WTC11 (cell line): ENCODE measurements at regions of chr6 and their contacts with region 1.

Region 1: DNA sequence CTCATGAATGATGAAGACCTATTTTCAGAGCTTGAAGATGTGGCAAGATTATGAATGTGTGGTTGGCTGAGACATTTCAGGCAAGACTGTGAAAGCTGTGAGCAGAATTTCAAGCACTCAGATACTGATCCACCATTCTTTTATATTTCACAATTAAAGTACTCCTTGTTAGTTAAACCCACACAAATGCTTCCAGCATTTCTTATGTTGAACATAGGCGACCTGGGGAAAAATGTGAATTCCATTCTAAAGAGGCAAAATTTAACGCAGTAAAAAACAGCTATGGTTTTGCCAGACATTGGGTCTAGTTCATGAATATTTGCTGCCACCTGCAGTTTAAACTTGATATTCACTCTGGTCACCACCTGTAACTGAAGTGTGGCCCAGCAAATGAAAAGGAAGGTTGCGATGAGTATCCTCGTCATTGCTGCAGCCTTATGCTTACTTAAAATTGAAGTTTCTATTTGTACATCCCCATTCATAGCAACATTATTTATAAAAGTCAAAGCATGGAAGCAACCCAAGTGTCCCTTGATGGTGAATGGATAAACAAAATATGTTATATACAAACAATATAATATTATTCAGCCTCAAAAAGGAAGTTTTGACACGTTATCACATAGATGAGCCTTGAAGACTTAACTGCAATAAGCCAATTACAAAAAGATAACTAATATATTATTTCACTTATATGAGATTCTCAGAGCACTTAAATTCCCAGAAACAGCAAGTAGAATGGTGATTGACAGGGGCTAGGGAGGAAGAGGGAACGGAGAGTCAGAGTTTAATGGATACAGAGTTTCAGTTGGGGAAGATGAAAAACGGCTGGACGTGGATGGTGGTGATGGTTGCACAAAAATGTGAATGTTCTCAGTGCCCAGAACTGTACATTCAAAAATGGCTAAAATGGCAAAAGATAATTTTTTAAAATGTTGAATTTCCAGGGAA is 32.4 kb upstream of the FAM184A start:
- DNase-seq: peak; percentile 17
- ATAC-seq: peak; percentile 78
- H3K4me3 Mint-ChIP-seq: no peak overlapping the region
- H3K27ac Mint-ChIP-seq: no peak overlapping the region
- H3K4me1 Mint-ChIP-seq: peaks cover 22% of the 10 kb centered on the region
- H3K27me3 Mint-ChIP-seq: no peaks in the 10 kb centered on the region
- CTCF ChIP-seq: no peak

Region 2: DNA sequence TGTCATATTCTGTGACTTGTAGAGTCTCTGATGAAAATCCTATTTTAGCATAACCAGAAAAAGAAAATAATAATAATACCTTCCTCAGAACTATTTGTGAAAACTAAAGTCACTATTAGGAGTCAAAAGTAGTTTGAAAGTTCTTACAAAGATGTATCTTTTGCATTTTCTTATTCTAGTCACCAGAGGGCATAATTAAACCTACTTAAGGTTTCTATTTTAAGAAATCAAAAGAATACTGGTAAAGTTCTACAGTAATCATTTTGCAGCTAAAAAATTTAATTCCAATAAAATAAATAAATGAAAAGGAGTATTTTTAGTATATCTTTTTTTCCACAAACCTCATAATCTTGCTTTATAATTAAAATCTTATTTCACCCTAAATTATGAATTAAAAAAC is 147.9 kb before region 1 on chr6:
- CTCF ChIA-PET with region 1: interaction called, 67 read pairs
- POLR2A ChIA-PET with region 1: no interaction called
- DNase-seq: no peak
- ATAC-seq: no peak
- H3K4me3 Mint-ChIP-seq: no peak overlapping the region
- H3K27ac Mint-ChIP-seq: no peak overlapping the region
- H3K4me1 Mint-ChIP-seq: peaks cover 6% of the 10 kb centered on the region
- H3K27me3 Mint-ChIP-seq: no peaks in the 10 kb centered on the region
- CTCF ChIP-seq: no peak

Region 3: GRCh38 chr6:119024111-119024510 is 86.8 kb before region 1 on chr6:
- CTCF ChIA-PET with region 1: interaction called, 10 read pairs
- POLR2A ChIA-PET with region 1: no interaction called
- DNase-seq: no peak
- ATAC-seq: peak; percentile 71
- H3K4me3 Mint-ChIP-seq: peak overlapping the region; percentile 43
- H3K27ac Mint-ChIP-seq: peak overlapping the region; percentile 66
- H3K4me1 Mint-ChIP-seq: peaks cover 61% of the 10 kb centered on the region
- H3K27me3 Mint-ChIP-seq: peaks cover 23% of the 10 kb centered on the region
- CTCF ChIP-seq: no peak

Region 4: DNA sequence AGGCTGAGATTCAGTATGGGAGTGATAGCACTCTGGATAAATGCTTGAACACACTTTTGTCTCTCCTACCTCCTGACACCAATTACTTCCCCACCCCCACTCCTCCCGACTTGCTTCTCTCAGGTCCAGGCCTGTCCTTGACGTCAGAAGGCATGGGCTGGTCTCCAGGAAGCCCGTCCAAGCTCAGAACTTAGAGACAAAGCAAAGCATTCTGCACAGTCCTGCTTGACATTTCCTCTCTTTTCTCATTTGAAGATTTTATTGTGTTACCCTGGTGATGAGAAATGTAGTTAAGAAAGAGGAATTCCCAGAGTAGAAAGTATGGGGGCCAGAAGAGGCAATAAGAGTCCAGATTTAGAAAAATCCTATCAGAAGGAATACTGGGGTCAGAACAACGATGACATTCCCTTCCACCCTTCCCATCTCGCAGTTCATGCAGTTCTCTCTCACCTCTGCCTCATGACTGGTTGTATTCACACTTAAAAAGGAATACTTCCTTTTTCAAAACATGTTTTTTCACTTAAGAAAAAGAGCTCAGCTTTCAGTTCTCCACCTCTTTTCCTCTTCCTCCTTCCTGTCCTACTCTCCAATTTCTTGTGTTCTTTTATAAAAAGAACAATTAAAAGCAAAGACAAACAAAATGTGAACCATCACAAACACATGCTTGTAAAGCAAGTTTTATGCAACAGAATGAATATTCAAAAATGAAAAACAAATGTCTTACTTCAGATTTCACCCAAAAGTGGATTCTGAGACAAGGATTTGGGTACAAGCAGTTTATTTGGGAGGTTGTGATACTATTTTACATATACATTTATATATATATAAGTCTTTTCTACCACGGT is 13.9 kb before region 1 on chr6:
- CTCF ChIA-PET with region 1: interaction called, 13 read pairs
- POLR2A ChIA-PET with region 1: no interaction called
- DNase-seq: no peak
- ATAC-seq: no peak
- H3K4me3 Mint-ChIP-seq: no peak overlapping the region
- H3K27ac Mint-ChIP-seq: no peak overlapping the region
- H3K4me1 Mint-ChIP-seq: peaks cover 12% of the 10 kb centered on the region
- H3K27me3 Mint-ChIP-seq: no peaks in the 10 kb centered on the region
- CTCF ChIP-seq: no peak

Region 5: DNA sequence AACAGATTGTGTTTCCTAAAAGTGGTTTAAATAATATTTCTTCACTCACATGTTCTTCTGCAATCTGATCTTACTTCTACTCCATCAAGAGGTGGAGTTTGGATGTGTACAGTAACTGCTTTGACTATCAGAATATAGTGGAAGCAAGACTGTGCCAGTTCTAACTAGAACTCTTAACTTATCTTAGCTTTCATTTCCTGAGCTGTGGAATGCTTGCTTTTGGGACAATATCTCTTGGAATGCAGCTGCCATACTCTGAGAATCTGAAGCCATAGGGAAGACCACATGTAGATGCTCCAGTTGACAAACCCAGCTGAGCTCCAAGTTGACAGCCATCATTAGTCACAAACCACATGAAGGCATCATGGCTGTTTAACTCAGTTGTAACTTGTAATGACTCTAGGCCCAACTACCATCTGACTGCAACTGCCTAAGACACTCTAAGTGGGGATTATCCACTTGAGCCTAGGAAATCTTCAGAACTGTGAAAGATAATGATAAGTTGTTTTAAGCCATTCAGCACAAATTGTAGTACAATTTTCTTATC is 279.4 kb after region 1 on chr6:
- CTCF ChIA-PET with region 1: no interaction called
- POLR2A ChIA-PET with region 1: no interaction called
- DNase-seq: no peak
- ATAC-seq: no peak
- H3K4me3 Mint-ChIP-seq: no peak overlapping the region
- H3K27ac Mint-ChIP-seq: no peak overlapping the region
- H3K4me1 Mint-ChIP-seq: peaks cover 2% of the 10 kb centered on the region; the same call in 1 of the 2 replicates
- H3K27me3 Mint-ChIP-seq: no peaks in the 10 kb centered on the region
- CTCF ChIP-seq: no peak